ENCODE measurements at regions of chr19 and their contacts with region 1.

Region 1: GRCh38 chr19:20077791-20078463 is at the start of gene ZNF90:
- DNase-seq: peak; percentile 96
- ATAC-seq: peak; percentile 100
- H3K4me3 Mint-ChIP-seq: peak within 1 kb of the TSS; percentile 97
- H3K27ac Mint-ChIP-seq: peak within 1 kb of the TSS; percentile 73
- H3K4me1 Mint-ChIP-seq: peaks cover 11% of the 10 kb centered on the region
- H3K27me3 Mint-ChIP-seq: no peaks in the 10 kb centered on the region
- total RNA-seq, gene ZNF90: 21.6 to 22.9 TPM

Region 2: GRCh38 chr19:20051841-20052768 is 25.8 kb before region 1 on chr19:
- CTCF ChIA-PET with region 1: interaction called, 6 read pairs
- POLR2A ChIA-PET with region 1: interaction called, 4 read pairs
- intact Hi-C with region 1: loop called in 1 of 2 experiments (anchors 1 kb)
- DNase-seq: peak; percentile 86
- ATAC-seq: peak; percentile 92
- H3K4me3 Mint-ChIP-seq: peak overlapping the region; percentile 89
- H3K27ac Mint-ChIP-seq: peak overlapping the region; percentile 92
- H3K4me1 Mint-ChIP-seq: peaks cover 13% of the 10 kb centered on the region
- H3K27me3 Mint-ChIP-seq: peaks cover 3% of the 10 kb centered on the region

Measured in activated CD4-positive, alpha-beta T cell treated with anti-CD3 and anti-CD28 coated beads for 36 hours (primary cell).